IMR-90 (cell line): ENCODE measurements at regions of chr12 and their contacts with region 1.

Region 1: DNA sequence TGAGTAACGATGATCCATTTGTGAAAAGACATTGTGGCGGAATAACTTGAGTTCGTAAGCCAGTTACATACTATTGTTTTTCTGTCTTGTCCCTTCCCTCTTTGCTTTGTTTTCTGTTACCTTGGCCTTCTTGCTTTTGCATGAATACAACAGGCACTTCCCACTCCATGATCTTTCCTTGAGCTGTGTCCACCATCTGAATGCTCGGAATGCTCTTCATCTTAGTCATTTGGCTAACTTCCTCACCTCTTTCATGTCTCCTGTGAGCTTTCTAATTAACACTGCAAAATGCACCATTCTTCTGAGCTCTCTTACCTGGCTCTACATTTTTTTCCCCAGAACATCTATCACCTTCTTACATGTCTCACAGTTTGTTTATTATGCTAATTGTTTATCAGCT is 10.0 kb downstream of the KNTC1 start:
- DNase-seq: no peak
- ATAC-seq: no peak
- H3K4me3 ChIP-seq: no peak overlapping the region
- H3K27ac ChIP-seq: no peak overlapping the region
- H3K4me1 ChIP-seq: no peaks in the 10 kb centered on the region
- H3K27me3 ChIP-seq: no peaks in the 10 kb centered on the region
- CTCF ChIP-seq: no peak
- POLR2A ChIP-seq: no peak
- RAD21 ChIP-seq: no peak

Region 2: GRCh38 chr12:122593910-122594309 is 56.9 kb after region 1 on chr12:
- CTCF ChIA-PET with region 1: no interaction called
- POLR2A ChIA-PET with region 1: no interaction called
- dilution Hi-C with region 1: no loop called
- in situ Hi-C with region 1: no loop called
- intact Hi-C with region 1: loop called (anchors 5 kb)
- DNase-seq: no peak
- ATAC-seq: no peak
- H3K4me3 ChIP-seq: no peak overlapping the region
- H3K27ac ChIP-seq: no peak overlapping the region
- H3K4me1 ChIP-seq: no peaks in the 10 kb centered on the region
- H3K27me3 ChIP-seq: no peaks in the 10 kb centered on the region
- CTCF ChIP-seq: no peak
- POLR2A ChIP-seq: no peak
- RAD21 ChIP-seq: no peak

Region 3: DNA sequence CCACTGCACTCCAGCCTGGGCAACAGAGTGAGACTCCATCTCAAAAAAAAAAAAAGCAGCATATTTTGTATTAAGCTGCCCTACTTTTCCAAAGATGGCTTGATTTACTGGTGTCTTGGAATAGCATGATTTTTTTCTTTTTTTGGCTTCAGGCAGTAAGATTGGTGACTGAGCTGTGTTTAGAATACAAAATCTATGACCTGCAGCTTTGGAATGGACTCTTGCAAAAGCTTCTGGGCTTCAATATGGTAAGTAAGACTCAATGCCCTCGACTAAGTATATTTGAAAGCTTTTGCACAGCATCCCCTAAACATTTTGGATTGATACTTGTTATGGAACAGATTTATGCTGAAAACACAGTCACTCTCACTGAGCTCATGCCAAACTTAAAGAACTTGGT is 77.8 kb after region 1 on chr12:
- CTCF ChIA-PET with region 1: interaction called, 10 read pairs
- POLR2A ChIA-PET with region 1: no interaction called
- dilution Hi-C with region 1: no loop called
- in situ Hi-C with region 1: no loop called
- intact Hi-C with region 1: no loop called
- DNase-seq: peak; percentile 67
- ATAC-seq: peak; percentile 82
- H3K4me3 ChIP-seq: no peak overlapping the region
- H3K27ac ChIP-seq: peak overlapping the region; percentile 7; the same call in 1 of the 2 replicates
- H3K4me1 ChIP-seq: peaks cover 7% of the 10 kb centered on the region; the same call in 1 of the 2 replicates
- H3K27me3 ChIP-seq: no peaks in the 10 kb centered on the region
- CTCF ChIP-seq: no peak
- POLR2A ChIP-seq: no peak
- RAD21 ChIP-seq: no peak

Region 4: GRCh38 chr12:122681814-122682213 is 144.8 kb after region 1 on chr12:
- CTCF ChIA-PET with region 1: no interaction called
- POLR2A ChIA-PET with region 1: no interaction called
- dilution Hi-C with region 1: no loop called
- in situ Hi-C with region 1: no loop called
- intact Hi-C with region 1: no loop called
- DNase-seq: peak; percentile 16
- ATAC-seq: no peak
- H3K4me3 ChIP-seq: no peak overlapping the region
- H3K27ac ChIP-seq: no peak overlapping the region
- H3K4me1 ChIP-seq: peaks cover 13% of the 10 kb centered on the region
- H3K27me3 ChIP-seq: no peaks in the 10 kb centered on the region
- CTCF ChIP-seq: no peak
- POLR2A ChIP-seq: no peak
- RAD21 ChIP-seq: no peak